ENCODE measurements at regions of chr1 and their contacts with region 1.

Region 1: GRCh38 chr1:101238681-101239094 is 1.9 kb downstream of the S1PR1 start:
- DNase-seq: peak; percentile 81
- H3K4me3 Mint-ChIP-seq: no peak overlapping the region
- H3K27ac Mint-ChIP-seq: no peak overlapping the region
- H3K4me1 Mint-ChIP-seq: peaks cover 21% of the 10 kb centered on the region
- H3K27me3 Mint-ChIP-seq: peaks cover 65% of the 10 kb centered on the region
- CTCF ChIP-seq: peak; percentile 81

Region 2: GRCh38 chr1:101002551-101002950 is 236.1 kb before region 1 on chr1:
- CTCF ChIA-PET with region 1: no interaction called
- intact Hi-C with region 1: loop called (anchors 5 kb)
- DNase-seq: peak; percentile 3
- H3K4me3 Mint-ChIP-seq: no peak overlapping the region
- H3K27ac Mint-ChIP-seq: no peak overlapping the region
- H3K4me1 Mint-ChIP-seq: peaks cover 21% of the 10 kb centered on the region
- H3K27me3 Mint-ChIP-seq: no peaks in the 10 kb centered on the region
- CTCF ChIP-seq: no peak

Region 3: DNA sequence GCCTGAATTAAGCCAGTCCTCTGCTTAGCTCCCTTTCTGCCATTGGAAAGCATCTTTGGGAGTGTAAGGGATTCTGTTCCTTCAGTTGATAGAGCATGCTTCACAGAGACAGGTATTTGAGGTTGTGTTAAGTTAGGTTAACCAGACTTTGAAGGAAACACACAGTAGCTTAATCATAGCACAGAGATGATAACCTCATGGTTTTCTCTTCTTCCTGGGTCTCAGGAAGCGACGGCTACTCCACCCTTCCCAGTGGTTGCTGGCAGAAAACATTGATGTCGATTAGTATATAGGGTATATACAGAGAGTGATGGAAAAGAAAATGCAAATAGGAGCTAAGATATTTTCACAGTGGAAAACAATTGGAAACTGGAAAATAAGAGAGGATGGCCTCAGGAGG is 40.2 kb after region 1 on chr1:
- CTCF ChIA-PET with region 1: interaction called, 18 read pairs
- intact Hi-C with region 1: no loop called
- DNase-seq: no peak
- H3K4me3 Mint-ChIP-seq: no peak overlapping the region
- H3K27ac Mint-ChIP-seq: no peak overlapping the region
- H3K4me1 Mint-ChIP-seq: no peaks in the 10 kb centered on the region
- H3K27me3 Mint-ChIP-seq: peaks cover 51% of the 10 kb centered on the region
- CTCF ChIP-seq: no peak